Activated CD4-positive, alpha-beta T cell treated with anti-CD3 and anti-CD28 coated beads for 36 hours (primary cell): ENCODE measurements at regions of chr10 and their contacts with region 1.

Region 1: GRCh38 chr10:16679511-16679910 is 137.7 kb downstream of the RSU1 start:
- DNase-seq: no peak
- ATAC-seq: no peak
- H3K4me3 Mint-ChIP-seq: no peak overlapping the region
- H3K27ac Mint-ChIP-seq: no peak overlapping the region
- H3K4me1 Mint-ChIP-seq: peaks cover 1% of the 10 kb centered on the region
- H3K27me3 Mint-ChIP-seq: no peaks in the 10 kb centered on the region

Region 2: DNA sequence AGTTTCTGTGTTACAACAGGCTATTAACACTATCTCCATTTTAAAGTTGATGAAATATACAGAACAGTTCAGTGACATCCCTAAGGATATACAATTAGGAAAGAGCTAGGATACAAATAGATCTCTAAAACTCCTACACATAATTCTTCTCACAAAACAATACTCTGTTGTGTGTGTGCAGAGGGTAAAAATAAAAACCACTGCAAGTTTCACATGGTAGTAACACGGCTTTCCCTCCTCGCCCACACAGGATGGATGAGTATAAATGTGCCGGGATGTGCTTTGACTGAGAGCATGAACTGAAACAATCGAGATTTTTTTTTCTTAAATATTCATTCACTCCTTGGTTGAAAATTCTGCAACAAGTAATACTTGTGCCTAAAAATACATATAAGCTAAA is 26.3 kb before region 1 on chr10:
- CTCF ChIA-PET with region 1: no interaction called
- POLR2A ChIA-PET with region 1: no interaction called
- intact Hi-C with region 1: loop called in 1 of 2 experiments (anchors 2 kb)
- DNase-seq: peak; percentile 35
- ATAC-seq: no peak
- H3K4me3 Mint-ChIP-seq: no peak overlapping the region
- H3K27ac Mint-ChIP-seq: no peak overlapping the region
- H3K4me1 Mint-ChIP-seq: peaks cover 18% of the 10 kb centered on the region
- H3K27me3 Mint-ChIP-seq: no peaks in the 10 kb centered on the region

Region 3: DNA sequence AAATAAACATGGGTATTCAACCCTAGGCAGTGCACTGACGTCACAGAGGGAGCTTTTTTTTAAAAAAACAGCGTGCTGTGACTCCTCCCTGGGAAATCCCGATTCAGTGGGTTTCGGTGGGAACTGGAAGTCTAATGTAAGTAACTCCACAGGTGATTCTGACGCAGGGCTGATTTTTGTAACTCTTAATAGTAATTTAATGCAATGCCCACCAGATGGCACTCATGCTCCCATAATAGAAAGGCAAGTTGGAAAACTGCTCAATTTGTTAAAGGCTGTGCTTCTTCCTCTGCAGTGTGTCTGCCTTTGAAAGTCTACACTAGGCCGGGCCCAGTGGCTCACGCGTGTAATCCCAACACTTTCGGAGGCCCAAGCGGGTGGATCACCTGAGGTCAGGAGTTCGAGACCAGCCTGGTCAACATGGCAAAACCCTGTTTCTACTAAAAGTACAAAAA is 148.6 kb after region 1 on chr10:
- CTCF ChIA-PET with region 1: no interaction called
- POLR2A ChIA-PET with region 1: no interaction called
- intact Hi-C with region 1: no loop called
- DNase-seq: peak; percentile 77
- ATAC-seq: peak; percentile 95
- H3K4me3 Mint-ChIP-seq: no peak overlapping the region
- H3K27ac Mint-ChIP-seq: no peak overlapping the region
- H3K4me1 Mint-ChIP-seq: peaks cover 2% of the 10 kb centered on the region
- H3K27me3 Mint-ChIP-seq: no peaks in the 10 kb centered on the region